MCF 10A (cell line): ENCODE measurements at regions of chr11 and their contacts with region 1.

Region 1: GRCh38 chr11:13462901-13463778 is at the start of gene BTBD10:
- DNase-seq: peak; percentile 95
- H3K4me3 Mint-ChIP-seq: peak within 1 kb of the TSS; percentile 99
- H3K27ac Mint-ChIP-seq: peak within 1 kb of the TSS; percentile 96
- H3K4me1 Mint-ChIP-seq: peaks cover 25% of the 10 kb centered on the region
- H3K27me3 Mint-ChIP-seq: no peaks in the 10 kb centered on the region
- CTCF ChIP-seq: no peak
- total RNA-seq, gene BTBD10: 38.3 and 42.2 TPM in 2 replicates

Region 2: DNA sequence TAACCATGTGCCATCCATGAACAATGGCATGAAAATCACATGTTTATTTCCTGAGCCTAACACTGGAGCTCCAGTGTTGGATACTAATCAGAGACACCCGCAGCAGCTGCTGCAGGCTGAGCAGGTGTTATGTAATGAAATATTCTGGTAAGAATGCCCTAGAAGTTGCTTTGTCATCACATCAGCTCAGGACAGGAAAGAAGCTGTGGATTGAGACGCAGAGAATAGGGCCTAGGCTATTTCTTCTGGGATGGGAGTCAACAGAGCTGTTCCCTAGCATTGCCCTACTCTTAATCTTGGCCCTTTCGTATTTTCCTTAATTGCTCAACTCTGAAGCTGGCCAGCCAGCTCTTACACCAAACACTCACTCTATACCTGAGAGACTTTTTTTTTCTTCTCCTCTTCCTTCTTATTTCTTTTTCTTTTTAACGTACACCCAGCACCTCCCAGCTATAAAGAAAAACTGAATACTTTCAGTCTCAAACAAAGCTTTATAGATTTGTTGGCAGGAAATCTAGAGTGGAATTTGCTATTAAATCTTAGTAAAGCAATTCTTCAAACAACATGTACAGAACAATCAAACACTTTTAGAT is 422.1 kb before region 1 on chr11:
- CTCF ChIA-PET with region 1: no interaction called
- POLR2A ChIA-PET with region 1: no interaction called
- intact Hi-C with region 1: no loop called
- DNase-seq: no peak
- H3K4me3 Mint-ChIP-seq: no peak overlapping the region
- H3K27ac Mint-ChIP-seq: no peak overlapping the region
- H3K4me1 Mint-ChIP-seq: peaks cover 10% of the 10 kb centered on the region
- H3K27me3 Mint-ChIP-seq: no peaks in the 10 kb centered on the region
- CTCF ChIP-seq: no peak

Region 3: DNA sequence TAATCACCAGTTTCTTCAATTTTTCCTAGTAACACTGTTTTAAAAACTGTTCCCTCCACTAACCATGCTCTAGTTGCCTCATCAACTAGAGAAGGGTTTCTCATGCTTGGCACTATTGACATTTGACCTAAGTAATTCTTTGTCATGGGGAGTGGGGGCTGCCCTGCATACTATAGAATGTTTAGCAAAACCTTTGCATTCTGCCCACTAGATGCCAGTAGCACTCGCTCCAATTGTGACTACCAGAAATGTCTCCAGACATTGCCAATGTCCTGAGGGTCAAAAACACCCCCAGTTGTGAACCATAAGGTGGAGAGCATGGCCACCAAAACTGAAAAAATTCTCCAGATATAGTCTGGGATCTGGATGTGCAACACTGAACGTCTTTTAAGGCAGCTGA is 213.1 kb before region 1 on chr11:
- CTCF ChIA-PET with region 1: no interaction called
- POLR2A ChIA-PET with region 1: interaction called, 3 read pairs
- intact Hi-C with region 1: loop called (anchors 10 kb)
- DNase-seq: peak; percentile 36
- H3K4me3 Mint-ChIP-seq: no peak overlapping the region
- H3K27ac Mint-ChIP-seq: no peak overlapping the region
- H3K4me1 Mint-ChIP-seq: no peaks in the 10 kb centered on the region
- H3K27me3 Mint-ChIP-seq: no peaks in the 10 kb centered on the region
- CTCF ChIP-seq: peak; percentile 52

Region 4: GRCh38 chr11:13384908-13385640 is 78.1 kb before region 1 on chr11:
- CTCF ChIA-PET with region 1: interaction called, 82 read pairs
- POLR2A ChIA-PET with region 1: interaction called, 23 read pairs
- intact Hi-C with region 1: loop called (anchors 2 kb)
- DNase-seq: peak; percentile 34
- H3K4me3 Mint-ChIP-seq: no peak overlapping the region
- H3K27ac Mint-ChIP-seq: no peak overlapping the region
- H3K4me1 Mint-ChIP-seq: no peaks in the 10 kb centered on the region
- H3K27me3 Mint-ChIP-seq: no peaks in the 10 kb centered on the region
- CTCF ChIP-seq: peak; percentile 58

Region 5: GRCh38 chr11:13440100-13440855 is 22.9 kb before region 1 on chr11:
- CTCF ChIA-PET with region 1: interaction called, 5 read pairs
- POLR2A ChIA-PET with region 1: interaction called, 148 read pairs
- intact Hi-C with region 1: no loop called
- DNase-seq: peak; percentile 95
- H3K4me3 Mint-ChIP-seq: peak overlapping the region; percentile 69
- H3K27ac Mint-ChIP-seq: peak overlapping the region; percentile 73
- H3K4me1 Mint-ChIP-seq: peaks cover 4% of the 10 kb centered on the region
- H3K27me3 Mint-ChIP-seq: no peaks in the 10 kb centered on the region
- CTCF ChIP-seq: no peak

Region 6: GRCh38 chr11:13480195-13480594 is 17.1 kb after region 1 on chr11:
- CTCF ChIA-PET with region 1: interaction called, 10 read pairs
- POLR2A ChIA-PET with region 1: interaction called, 8 read pairs
- intact Hi-C with region 1: no loop called
- DNase-seq: peak; percentile 21
- H3K4me3 Mint-ChIP-seq: no peak overlapping the region
- H3K27ac Mint-ChIP-seq: no peak overlapping the region
- H3K4me1 Mint-ChIP-seq: no peaks in the 10 kb centered on the region
- H3K27me3 Mint-ChIP-seq: peaks cover 28% of the 10 kb centered on the region
- CTCF ChIP-seq: no peak

Region 7: DNA sequence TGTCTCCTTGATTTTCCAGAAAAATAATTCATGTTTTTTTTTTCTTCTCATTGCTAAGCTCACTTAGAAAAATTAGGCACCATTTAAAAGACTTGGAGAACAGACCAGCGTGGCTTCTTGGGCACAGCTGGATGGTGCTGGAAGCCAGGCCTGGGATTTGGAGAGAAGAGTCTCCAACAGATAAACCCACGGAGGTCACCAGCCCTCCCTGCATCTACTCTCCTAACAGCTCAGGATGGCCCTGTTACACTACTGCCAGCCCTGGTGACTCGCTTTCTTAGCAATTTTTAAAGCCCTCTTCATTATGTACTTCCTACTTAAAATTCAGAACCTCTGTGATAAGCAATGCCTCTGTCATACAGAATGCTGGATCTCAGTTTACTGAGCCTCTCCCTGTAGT is 30.9 kb after region 1 on chr11:
- CTCF ChIA-PET with region 1: no interaction called
- POLR2A ChIA-PET with region 1: no interaction called
- intact Hi-C with region 1: no loop called
- DNase-seq: no peak
- H3K4me3 Mint-ChIP-seq: no peak overlapping the region
- H3K27ac Mint-ChIP-seq: no peak overlapping the region
- H3K4me1 Mint-ChIP-seq: no peaks in the 10 kb centered on the region
- H3K27me3 Mint-ChIP-seq: peaks cover 51% of the 10 kb centered on the region
- CTCF ChIP-seq: no peak

Region 8: DNA sequence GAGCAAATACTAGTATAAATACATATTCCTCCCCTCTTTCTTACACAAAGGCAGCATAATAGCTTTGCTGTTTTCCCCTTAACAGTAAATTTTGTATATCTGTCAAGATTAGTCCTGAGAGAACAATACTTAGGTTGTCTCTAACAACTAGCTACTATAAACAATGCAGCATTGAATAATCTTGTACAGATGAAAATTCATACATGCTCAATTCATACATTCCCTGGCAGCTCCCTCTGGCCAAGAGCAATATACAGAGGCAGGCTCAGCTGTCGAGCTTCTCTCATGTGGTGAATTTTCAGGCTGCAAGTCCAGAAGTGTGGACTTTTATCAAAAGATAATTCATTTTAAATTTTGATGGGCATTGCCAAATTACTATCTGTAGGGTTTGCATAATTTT is 113.9 kb after region 1 on chr11:
- CTCF ChIA-PET with region 1: no interaction called
- POLR2A ChIA-PET with region 1: no interaction called
- intact Hi-C with region 1: no loop called
- DNase-seq: no peak
- H3K4me3 Mint-ChIP-seq: no peak overlapping the region
- H3K27ac Mint-ChIP-seq: no peak overlapping the region
- H3K4me1 Mint-ChIP-seq: no peaks in the 10 kb centered on the region
- H3K27me3 Mint-ChIP-seq: peaks cover 53% of the 10 kb centered on the region
- CTCF ChIP-seq: no peak